ENCODE measurements at regions of chr16 and their contacts with region 1.

Region 1: DNA sequence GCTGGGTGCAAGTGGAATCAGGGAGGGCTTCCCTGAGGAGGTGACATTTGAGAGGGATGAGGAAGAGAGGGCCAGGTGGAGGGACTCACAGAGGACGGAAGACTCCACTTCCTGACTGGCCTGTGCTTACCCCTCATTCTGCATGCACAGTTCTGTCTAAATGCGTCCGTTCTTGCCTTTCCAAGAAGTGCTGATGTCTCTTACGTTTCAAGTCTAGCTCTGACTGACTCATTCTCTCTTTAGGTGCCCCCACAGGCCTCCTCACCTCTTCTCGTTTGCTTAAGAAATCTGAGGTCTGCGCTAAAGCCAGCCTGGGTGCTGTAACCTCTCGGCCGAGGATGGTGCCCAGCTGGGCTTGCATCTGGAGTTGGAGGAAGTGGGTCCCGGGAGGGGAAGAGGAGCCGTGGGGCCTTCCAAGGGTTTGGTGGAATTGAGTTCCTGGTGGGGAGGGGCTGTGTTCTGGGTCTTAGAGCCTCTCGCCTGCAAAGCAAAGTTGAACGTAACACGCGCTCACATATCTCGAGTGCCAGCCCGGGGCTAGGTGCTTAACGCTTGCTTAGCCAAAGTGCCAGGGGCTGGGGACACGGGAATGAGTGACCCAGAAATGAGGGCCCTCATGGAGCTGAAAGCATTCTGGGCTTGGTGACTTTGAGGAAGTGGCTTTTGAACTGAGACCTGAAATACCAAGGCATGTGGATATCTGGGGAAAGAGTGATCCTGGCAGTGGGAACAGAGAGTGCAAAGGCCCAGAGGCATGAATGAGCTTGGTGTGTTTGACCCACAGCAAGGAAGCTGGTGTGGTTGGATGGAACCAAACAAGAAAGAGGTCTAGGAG is 4.8 kb downstream of the IL4R start:
- DNase-seq: peak; percentile 79
- H3K4me3 Mint-ChIP-seq: peak overlapping the region; percentile 94
- H3K27ac Mint-ChIP-seq: peak overlapping the region; percentile 96
- H3K4me1 Mint-ChIP-seq: peaks cover 76% of the 10 kb centered on the region
- H3K27me3 Mint-ChIP-seq: no peaks in the 10 kb centered on the region

Region 2: DNA sequence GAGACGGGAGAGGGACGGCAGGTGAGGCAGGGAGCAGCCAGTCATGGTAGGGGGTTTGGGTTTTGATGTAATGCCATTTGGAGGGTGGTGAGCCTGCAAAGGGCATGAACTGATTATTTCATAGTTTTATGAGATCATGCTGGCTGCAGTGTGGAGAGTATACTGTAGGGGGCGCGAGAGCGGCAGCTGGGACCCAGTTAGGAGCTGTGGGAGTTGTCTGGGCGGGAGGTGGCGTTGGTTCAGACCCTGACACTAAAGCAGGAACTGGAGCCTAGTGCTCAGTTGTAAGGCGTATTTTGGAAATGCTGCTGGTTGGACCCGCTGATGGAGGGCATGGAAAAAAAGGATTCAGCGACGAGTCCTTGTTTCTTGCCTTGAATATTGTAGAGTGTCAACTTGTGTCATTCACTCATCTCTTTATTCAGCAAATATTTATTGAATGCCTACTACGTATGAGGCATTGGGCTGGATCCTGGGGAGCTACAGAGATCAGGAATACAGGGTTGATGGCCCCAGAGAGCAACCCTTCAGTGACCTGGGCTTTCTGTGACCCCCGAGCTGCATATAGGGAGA is 139.0 kb before region 1 on chr16:
- CTCF ChIA-PET with region 1: interaction called, 22 read pairs
- POLR2A ChIA-PET with region 1: interaction called, 3 read pairs
- intact Hi-C with region 1: loop called (anchors 1 kb)
- DNase-seq: peak; percentile 94
- H3K4me3 Mint-ChIP-seq: peak overlapping the region; percentile 39
- H3K27ac Mint-ChIP-seq: peak overlapping the region; percentile 48
- H3K4me1 Mint-ChIP-seq: peaks cover 36% of the 10 kb centered on the region
- H3K27me3 Mint-ChIP-seq: no peaks in the 10 kb centered on the region

Region 3: DNA sequence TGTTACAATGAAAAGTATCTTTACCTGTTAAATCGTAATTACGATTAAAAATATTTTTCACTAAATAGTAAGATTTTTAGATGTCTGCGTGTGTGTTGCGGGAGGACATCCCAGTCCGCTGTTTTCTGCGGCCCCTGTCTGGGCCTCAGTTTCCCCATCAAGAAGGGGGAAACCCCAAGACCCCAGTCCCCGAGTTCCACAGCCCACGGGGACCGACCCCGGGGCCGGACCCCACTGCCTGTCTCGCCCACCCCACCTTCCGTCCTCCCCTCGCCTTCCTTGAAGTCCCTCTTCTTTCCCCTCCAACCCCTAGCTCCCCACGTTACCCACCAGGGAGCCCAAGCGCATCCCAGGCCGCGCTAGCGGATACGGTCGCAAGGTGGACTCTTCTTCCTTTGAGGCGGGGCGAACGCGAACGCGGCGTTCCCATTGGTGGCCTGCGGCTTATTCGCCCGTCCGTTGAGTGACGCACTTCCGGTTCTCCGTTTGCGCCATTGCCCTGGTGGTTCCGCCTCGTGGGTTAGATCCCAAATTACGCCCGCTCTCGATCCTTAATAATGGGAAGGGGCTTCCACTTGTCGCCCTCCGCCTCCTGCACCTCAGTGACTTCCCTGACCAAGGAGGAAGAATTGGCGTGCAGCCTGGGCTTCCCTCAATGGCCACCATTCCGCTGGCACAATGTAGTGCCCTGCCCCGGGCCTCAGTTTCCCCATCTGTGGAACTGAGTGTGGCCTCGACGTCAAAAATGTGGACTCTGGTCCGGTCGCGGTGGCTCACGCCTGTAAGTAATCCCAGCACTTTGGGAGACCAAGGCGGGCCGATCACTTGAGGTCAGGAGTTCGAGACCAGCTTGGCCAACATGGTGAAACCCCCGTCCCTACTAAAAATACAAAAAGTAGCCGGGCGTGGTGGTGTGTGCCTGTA is 50.0 kb before region 1 on chr16 and contains the start of gene NSMCE1:
- CTCF ChIA-PET with region 1: interaction called, 8 read pairs
- POLR2A ChIA-PET with region 1: interaction called, 16 read pairs
- intact Hi-C with region 1: loop called (anchors 2 kb)
- DNase-seq: peak; percentile 98
- H3K4me3 Mint-ChIP-seq: peak within 1 kb of the TSS; percentile 89
- H3K27ac Mint-ChIP-seq: peak within 1 kb of the TSS; percentile 92
- H3K4me1 Mint-ChIP-seq: peaks cover 64% of the 10 kb centered on the region
- H3K27me3 Mint-ChIP-seq: no peaks in the 10 kb centered on the region
- total RNA-seq, gene NSMCE1: 120 to 121 TPM

Region 4: GRCh38 chr16:27355610-27356009 is 37.0 kb after region 1 on chr16:
- CTCF ChIA-PET with region 1: interaction called, 5 read pairs
- POLR2A ChIA-PET with region 1: no interaction called
- intact Hi-C with region 1: loop called (anchors 1 kb)
- DNase-seq: peak; percentile 72
- H3K4me3 Mint-ChIP-seq: no peak overlapping the region
- H3K27ac Mint-ChIP-seq: peak overlapping the region; percentile 38
- H3K4me1 Mint-ChIP-seq: peaks cover 2% of the 10 kb centered on the region
- H3K27me3 Mint-ChIP-seq: no peaks in the 10 kb centered on the region

Region 5: DNA sequence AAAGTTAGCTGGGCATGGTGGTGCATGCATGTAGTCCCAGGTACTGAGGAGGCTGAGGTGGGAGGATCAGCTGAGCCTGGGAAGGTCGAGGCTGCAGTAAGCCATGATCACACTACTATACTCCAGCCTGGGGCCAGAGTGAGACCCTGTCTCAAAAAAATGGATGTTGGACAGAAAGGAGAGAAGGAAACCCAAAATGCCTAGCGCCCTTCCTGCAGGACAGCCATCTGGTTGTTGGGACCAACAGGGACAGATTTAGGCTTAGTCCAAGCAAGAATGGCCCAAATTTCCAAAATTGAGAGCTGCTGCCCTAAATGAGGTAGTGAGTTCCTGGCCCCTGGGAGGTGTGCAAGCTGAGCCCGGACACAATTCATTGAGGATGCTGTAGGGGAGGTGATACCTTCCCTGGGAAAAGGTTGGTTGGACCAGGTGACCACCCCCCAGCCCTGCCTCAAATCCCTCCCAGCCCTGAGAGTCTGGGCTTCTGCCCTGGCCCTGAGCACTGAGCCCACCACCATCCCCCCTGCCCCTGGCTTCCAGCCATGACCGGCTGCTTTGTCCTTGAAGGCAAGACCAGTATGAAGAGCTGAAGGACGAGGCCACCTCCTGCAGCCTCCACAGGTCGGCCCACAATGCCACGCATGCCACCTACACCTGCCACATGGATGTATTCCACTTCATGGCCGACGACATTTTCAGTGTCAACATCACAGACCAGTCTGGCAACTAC is 118.5 kb after region 1 on chr16:
- CTCF ChIA-PET with region 1: no interaction called
- POLR2A ChIA-PET with region 1: no interaction called
- intact Hi-C with region 1: no loop called
- DNase-seq: peak; percentile 4
- H3K4me3 Mint-ChIP-seq: no peak overlapping the region
- H3K27ac Mint-ChIP-seq: peak overlapping the region; percentile 11
- H3K4me1 Mint-ChIP-seq: peaks cover 4% of the 10 kb centered on the region
- H3K27me3 Mint-ChIP-seq: no peaks in the 10 kb centered on the region

Region 6: DNA sequence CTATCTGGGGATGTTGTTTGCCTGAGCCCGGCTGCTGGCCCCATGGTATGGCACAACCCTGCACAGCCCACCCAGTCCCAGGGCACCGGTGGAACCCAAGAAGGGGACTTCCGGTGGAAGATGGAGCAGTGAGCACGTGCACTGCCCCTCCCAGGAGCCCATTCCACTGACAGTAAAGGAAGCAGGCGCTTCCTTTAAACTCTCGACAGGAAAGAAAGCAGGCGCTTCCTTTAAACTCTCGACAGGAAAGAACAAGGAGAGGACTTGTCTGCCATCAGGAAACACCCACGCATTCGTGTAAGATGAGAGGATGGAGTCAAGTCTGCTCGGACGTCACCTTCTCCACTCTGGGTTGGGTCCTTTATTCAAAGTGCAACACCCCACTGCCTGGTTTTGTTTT is 137.1 kb after region 1 on chr16:
- CTCF ChIA-PET with region 1: interaction called, 3 read pairs
- POLR2A ChIA-PET with region 1: interaction called, 6 read pairs
- intact Hi-C with region 1: loop called (anchors 1 kb)
- DNase-seq: peak; percentile 50
- H3K4me3 Mint-ChIP-seq: no peak overlapping the region
- H3K27ac Mint-ChIP-seq: peak overlapping the region; percentile 35
- H3K4me1 Mint-ChIP-seq: peaks cover 57% of the 10 kb centered on the region
- H3K27me3 Mint-ChIP-seq: no peaks in the 10 kb centered on the region

Measured in activated CD4-positive, alpha-beta memory T cell treated with anti-CD3 and anti-CD28 coated beads for 36 hours (primary cell).